OCI-LY7 (cell line): ENCODE measurements at regions of chr1 and their contacts with region 1.

Region 1: GRCh38 chr1:86965012-86965826 is 50.8 kb downstream of the HS2ST1 start:
- DNase-seq: peak; percentile 52
- H3K4me3 ChIP-seq: no peak overlapping the region
- H3K27ac ChIP-seq: peak overlapping the region; percentile 16
- H3K4me1 ChIP-seq: peaks cover 17% of the 10 kb centered on the region
- CTCF ChIP-seq: peak; percentile 88

Region 2: DNA sequence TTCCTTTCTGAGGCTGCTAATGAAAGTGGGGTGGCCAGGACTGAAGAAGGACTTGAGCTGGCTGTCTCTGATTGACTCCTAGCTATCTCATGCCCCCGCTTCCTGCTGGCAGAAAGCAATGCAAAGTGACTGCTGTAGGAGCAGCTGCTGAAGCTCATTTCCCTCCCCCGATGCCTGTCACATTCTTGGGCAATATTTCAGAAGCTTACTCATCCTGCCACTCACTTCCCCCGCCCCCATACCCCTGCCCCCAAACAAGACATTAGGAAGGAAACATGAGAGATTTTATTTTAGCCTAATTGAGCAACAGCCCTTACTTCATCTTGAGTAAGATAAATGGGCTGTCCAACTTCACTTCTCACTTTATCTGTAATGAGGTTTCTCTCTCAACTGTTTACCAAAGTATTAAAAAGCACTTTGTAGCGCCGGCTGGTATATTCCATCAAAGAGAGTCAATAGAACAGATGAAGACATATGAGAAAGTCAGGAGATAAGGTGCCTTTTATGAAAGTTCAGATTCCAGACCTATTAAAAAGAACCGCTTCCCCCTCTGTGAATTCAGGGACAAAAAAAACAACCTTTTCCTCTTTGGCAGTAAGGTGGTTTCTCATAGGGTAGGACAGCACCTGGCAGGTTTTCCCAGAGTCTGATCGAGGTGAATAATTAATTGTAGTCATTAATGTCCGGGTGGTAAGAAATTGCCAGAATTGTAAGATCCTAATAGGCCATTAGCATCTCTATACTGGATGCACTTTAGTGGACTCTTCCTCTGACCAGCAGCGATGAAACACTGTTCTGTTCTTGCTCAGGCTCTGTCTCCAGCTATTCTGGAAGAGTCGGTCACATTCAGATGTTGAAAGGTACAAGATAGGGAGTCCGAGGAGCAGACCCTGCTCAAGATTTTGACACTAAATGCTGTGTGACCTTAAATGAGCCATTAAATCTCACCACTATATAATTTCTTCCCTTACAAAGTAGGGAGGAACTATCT is 190.6 kb before region 1 on chr1:
- CTCF ChIA-PET with region 1: no interaction called
- POLR2A ChIA-PET with region 1: no interaction called
- intact Hi-C with region 1: loop called (anchors 5 kb)
- DNase-seq: peak; percentile 93
- H3K4me3 ChIP-seq: peak overlapping the region; percentile 56
- H3K27ac ChIP-seq: peak overlapping the region; percentile 89
- H3K4me1 ChIP-seq: peaks cover 47% of the 10 kb centered on the region
- CTCF ChIP-seq: no peak

Region 3: DNA sequence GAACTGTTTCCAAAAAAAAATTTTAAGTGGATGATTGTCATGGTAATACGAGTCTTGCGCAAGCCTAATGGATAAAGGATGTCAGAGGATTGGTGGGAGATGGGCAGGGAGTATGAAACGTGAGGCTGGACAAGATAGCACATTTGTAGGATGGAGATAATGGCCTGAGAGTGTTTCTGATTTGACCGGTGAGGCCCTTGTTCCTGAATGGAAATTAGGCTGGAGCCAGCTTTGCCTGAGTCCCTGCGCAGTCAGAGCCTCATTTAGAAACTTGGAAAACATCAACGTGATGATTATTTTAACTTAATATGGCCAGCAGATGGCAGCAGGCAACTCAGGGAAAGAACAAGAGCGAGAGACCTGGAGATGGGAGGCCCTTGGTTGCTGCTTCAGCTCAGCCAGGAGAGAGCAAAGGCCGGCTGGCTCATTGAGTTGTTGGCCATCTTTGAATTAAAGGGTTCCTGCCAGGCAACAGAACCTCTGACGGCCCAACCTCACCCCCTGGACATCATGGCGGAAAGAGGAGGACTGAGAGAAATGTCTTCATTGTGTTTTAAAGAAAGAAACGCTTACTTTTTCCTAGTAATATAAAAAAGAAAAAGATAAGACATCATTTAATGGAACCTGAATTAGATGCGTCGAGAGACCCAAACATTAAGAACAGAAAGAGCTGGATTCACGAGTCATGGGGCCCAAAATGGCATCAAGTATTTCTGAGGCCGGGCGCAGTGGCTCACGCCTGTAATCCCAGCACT is 131.6 kb before region 1 on chr1:
- CTCF ChIA-PET with region 1: no interaction called
- POLR2A ChIA-PET with region 1: no interaction called
- intact Hi-C with region 1: loop called (anchors 5 kb)
- DNase-seq: peak; percentile 92
- H3K4me3 ChIP-seq: peak overlapping the region; percentile 73
- H3K27ac ChIP-seq: peak overlapping the region; percentile 66
- H3K4me1 ChIP-seq: peaks cover 35% of the 10 kb centered on the region
- CTCF ChIP-seq: peak; percentile 87

Region 4: DNA sequence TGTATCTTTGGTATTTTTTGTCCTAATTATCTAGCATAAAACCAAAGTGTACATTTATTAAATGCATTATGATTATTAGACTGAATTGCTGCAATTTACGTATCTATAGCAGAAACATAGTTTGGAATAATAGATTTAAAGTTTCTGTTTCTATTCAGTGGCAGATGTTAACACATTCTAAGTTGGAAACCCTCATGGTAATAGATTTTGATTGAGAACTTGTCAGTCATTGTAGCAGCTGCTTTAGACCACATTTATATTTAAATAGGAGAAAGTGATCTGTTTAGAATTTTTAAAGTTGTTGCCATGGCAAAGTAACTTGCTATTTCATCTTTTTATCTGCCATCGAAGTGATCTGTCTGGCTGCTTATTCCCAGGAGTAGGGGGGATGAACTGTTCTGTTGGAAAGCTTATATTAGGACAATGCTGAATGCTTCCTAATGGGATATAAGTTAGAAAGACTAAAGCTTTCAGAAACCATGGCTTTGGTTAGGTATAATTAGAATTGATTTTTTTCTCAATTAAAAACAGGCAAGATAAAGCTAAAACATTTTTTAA is 10.9 kb after region 1 on chr1:
- CTCF ChIA-PET with region 1: no interaction called
- POLR2A ChIA-PET with region 1: interaction called, 11 read pairs
- intact Hi-C with region 1: no loop called
- DNase-seq: no peak
- H3K4me3 ChIP-seq: no peak overlapping the region
- H3K27ac ChIP-seq: no peak overlapping the region
- H3K4me1 ChIP-seq: peaks cover 32% of the 10 kb centered on the region
- CTCF ChIP-seq: no peak

Region 5: GRCh38 chr1:87051965-87052364 is 86.7 kb after region 1 on chr1:
- CTCF ChIA-PET with region 1: no interaction called
- POLR2A ChIA-PET with region 1: interaction called, 6 read pairs
- intact Hi-C with region 1: loop called (anchors 5 kb)
- DNase-seq: peak; percentile 83
- H3K4me3 ChIP-seq: peak overlapping the region; percentile 57
- H3K27ac ChIP-seq: peak overlapping the region; percentile 98
- H3K4me1 ChIP-seq: peaks cover 81% of the 10 kb centered on the region
- CTCF ChIP-seq: no peak